ENCODE measurements at regions of chr2 and their contacts with region 1.

Region 1: GRCh38 chr2:27428213-27428977 is at the start of gene NRBP1:
- DNase-seq: peak; percentile 58 to 93
- H3K4me3 ChIP-seq: peak within 1 kb of the TSS; percentile 93 to 98
- H3K27ac ChIP-seq: peak within 1 kb of the TSS; percentile 95 to 99
- H3K4me1 ChIP-seq: peaks cover 16 to 22% of the 10 kb centered on the region in 2 donors
- H3K27me3 ChIP-seq: no peaks in the 10 kb centered on the region
- CTCF ChIP-seq: no peak
- total RNA-seq, gene NRBP1: 42.1 TPM

Region 2: DNA sequence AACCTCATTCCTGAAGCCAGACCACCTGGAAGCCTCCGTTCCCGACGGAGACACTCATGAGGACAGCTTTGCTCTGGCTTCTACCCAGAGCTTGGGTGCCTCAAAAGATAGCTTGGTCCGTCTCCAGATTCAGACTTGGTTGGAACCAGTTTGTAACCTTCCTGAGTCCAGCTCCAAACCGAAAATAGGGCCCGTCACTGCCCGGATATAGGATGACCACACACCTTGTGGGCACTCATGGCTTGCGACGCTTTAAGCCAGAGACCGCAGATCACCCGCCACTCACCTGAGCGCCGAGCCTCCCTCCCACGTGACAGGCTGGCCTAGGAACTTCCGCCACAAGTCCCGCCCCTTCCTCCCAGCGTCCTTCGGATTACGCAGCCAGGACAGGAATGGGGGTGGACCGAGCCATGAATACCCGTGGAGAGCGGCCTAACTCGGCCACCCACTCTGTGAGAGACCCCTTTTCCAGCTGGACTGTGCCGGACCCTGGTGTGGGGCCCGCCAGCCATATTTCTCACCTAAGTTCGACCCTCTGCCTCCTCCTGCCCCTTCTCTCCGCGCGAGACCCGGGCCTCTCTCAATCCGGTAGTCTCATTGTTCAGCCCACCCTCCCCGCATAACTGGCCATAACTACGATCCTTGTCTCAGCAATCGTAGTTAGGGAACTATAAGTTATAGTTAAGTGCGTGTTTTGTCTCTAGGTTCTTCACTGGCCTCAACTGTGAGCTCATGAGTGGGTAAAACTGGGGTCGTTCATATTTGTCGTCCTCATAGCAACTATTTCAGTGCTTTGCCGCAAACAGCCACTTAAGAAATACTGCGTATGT is 105.4 kb before region 1 on chr2 and contains the start of gene MPV17:
- intact Hi-C with region 1: loop called (anchors 2 kb)
- DNase-seq: peak; percentile 74 to 93
- H3K4me3 ChIP-seq: peak within 1 kb of the TSS; percentile 65 to 77
- H3K27ac ChIP-seq: peak within 1 kb of the TSS; percentile 90
- H3K4me1 ChIP-seq: peaks cover 0 to 14% of the 10 kb centered on the region in 2 donors
- H3K27me3 ChIP-seq: no peaks in the 10 kb centered on the region
- CTCF ChIP-seq: no peak
- total RNA-seq, gene MPV17: 239 TPM

Region 3: GRCh38 chr2:27370026-27370815 is 58.2 kb before region 1 on chr2 and contains the starts of genes EIF2B4 and SNX17:
- intact Hi-C with region 1: loop called (anchors 1 kb)
- DNase-seq: peak; percentile 97 to 100
- H3K4me3 ChIP-seq: peak within 1 kb of the TSS; percentile 70 to 84
- H3K27ac ChIP-seq: peak within 1 kb of the TSS; percentile 87 to 95
- H3K4me1 ChIP-seq: peaks cover 9 to 23% of the 10 kb centered on the region in 2 donors
- H3K27me3 ChIP-seq: no peaks in the 10 kb centered on the region
- CTCF ChIP-seq: peak; percentile 68 to 87 (median 83)
- total RNA-seq, gene EIF2B4: 34.8 TPM
- total RNA-seq, gene SNX17: 94.0 TPM

Region 4: DNA sequence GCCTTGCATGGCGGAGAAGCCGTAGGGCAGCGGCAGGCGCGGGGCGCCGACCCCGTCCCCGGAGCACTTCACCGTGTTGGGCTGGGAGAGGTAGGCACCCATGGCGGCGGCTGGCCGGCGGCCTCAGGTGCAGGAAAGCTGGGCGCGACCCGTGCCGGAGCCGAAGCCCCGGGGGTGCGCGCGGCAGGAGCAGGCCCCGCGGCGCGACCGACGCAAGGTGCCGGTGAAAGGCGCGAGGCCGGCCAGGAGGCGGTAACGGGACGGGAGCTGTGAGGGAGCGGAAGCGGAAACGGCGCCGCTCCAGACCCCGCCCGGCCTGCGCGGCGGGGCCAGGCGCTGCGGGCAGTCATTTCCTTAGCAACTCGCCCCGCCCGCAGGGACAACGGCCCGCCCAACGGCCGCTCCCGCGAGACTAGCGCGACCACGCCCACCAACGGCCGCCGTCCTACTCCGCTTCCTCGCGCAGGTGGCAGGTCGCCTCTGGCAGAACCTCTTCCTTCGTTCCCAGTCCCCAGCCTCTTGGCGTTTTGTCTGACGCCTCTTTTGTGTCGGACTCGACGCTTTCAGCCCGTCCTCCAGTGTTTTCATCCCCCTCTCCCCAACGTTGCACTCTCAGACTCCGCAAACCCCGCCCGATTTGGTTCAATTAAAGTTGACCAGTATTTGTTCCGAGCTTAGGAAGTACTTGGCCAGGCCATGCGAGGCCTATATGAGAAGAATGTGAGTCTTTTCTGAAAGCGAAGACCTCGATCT is 18.9 kb before region 1 on chr2 and contains the start of gene PPM1G:
- intact Hi-C with region 1: loop called (anchors 1 kb)
- DNase-seq: peak; percentile 56 to 95
- H3K4me3 ChIP-seq: peak within 1 kb of the TSS; percentile 96 to 97
- H3K27ac ChIP-seq: peak within 1 kb of the TSS; percentile 80 to 91
- H3K4me1 ChIP-seq: peaks cover 6 to 12% of the 10 kb centered on the region in 2 donors
- H3K27me3 ChIP-seq: no peaks in the 10 kb centered on the region
- CTCF ChIP-seq: no peak
- total RNA-seq, gene PPM1G: 24.7 TPM

Region 5: DNA sequence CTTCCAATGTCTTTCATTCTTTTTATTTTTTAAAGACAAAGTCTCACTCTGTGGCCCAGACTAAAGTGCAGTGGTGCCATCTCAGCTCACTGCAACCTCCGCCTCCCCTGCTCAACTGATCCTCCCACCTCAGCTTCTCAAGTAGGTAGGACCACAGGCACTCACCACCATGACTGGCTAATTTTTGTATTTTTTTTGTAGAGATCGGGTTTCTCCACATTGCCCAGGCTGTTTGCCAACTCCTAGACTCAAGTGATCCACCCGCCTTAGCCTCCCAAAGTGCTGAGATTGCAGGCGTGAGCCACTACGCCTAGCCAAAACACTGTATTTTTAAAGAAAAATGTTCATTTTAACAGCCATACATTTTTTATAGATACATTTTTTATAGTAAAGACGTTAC is 80.9 kb after region 1 on chr2:
- intact Hi-C with region 1: no loop called
- DNase-seq: no peak
- H3K4me3 ChIP-seq: no peak overlapping the region
- H3K27ac ChIP-seq: no peak overlapping the region
- H3K4me1 ChIP-seq: no peaks in the 10 kb centered on the region
- H3K27me3 ChIP-seq: no peaks in the 10 kb centered on the region
- CTCF ChIP-seq: no peak

Region 6: DNA sequence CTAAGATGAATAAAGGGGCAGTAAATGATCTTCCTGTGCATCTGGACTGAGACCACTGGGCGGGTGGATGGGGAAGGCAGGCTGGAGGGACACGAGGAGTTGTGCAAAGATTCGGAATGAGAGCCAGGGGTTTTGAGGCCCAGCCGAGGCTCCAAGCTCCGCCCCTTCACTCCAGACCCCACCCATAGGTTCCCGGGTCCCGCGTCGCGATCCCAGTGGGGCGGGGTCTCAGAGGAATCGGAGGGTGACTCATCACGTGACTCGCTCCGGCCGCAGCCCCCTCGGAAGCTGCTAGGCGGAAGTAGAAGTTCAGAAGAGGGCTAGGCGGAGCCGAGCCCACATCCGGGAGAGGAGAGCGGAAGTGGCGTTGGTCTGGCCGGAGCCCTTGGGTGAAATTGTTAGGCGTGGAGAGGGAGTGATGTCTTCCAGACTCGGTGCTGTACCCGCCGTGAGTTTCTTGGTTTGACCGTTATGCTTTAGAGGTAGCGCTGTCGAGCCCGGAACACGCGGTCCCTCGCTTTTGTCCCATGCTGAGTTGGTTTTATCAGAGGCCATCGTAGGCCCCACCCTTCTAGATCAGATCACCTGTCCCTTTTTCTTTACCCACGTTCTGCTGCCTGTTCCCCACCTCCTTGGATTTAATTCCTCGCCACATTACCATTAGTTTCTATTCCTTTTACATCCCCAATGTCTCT is 154.4 kb after region 1 on chr2 and contains the start of gene ZNF512:
- intact Hi-C with region 1: loop called (anchors 2 kb)
- DNase-seq: peak; percentile 74 to 96
- H3K4me3 ChIP-seq: peak within 1 kb of the TSS; percentile 72 to 75
- H3K27ac ChIP-seq: peak within 1 kb of the TSS; percentile 61 to 74
- H3K4me1 ChIP-seq: peaks cover 0 to 17% of the 10 kb centered on the region in 2 donors
- H3K27me3 ChIP-seq: no peaks in the 10 kb centered on the region
- CTCF ChIP-seq: no peak
- total RNA-seq, gene ZNF512: 64.8 TPM